H1 (cell line): ENCODE measurements at regions of chr17 and their contacts with region 1.

Region 1: DNA sequence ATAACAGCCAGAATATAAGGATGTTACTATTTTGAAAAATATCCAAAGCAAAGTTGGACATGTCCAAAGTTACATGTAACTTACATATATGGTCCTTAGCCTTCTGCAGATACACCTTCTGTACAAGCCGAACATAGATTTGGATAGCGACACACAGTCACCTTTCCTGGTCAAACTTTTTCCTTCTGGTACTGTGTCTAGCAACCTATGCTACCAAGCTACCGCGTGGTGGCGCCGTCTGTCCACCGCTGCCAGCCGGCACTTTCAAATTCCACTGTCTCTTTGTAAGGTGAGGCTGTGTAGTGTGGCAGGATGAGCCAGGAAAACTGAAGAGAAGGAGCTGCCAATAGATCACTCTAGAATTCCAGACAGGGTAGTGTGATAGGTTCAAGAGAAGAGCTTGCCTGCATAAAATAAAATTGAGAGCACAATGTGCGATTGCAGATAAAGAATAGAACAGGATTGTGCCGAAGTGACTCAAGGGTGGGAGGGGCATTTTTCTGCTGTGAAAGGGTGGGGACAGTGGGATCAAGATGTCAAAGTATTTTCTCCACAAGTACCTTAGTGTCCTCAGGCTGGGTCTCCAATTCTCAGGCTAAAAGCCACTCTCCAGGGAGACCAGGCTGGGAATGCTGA is 366.9 kb downstream of the SLC39A11 start:
- DNase-seq: peak in 1 of 2 experiments; percentile 71
- H3K4me3 ChIP-seq: no peak overlapping the region
- H3K27ac ChIP-seq: no peak overlapping the region
- H3K4me1 ChIP-seq: no peaks in the 10 kb centered on the region; a peak in 3 of 7 replicates
- H3K27me3 ChIP-seq: no peaks in the 10 kb centered on the region
- CTCF ChIP-seq: peak; percentile 90 to 93 (median 93)
- EP300 ChIP-seq: no peak
- POLR2A ChIP-seq: no peak
- RAD21 ChIP-seq: peak; percentile 96 to 98

Region 2: DNA sequence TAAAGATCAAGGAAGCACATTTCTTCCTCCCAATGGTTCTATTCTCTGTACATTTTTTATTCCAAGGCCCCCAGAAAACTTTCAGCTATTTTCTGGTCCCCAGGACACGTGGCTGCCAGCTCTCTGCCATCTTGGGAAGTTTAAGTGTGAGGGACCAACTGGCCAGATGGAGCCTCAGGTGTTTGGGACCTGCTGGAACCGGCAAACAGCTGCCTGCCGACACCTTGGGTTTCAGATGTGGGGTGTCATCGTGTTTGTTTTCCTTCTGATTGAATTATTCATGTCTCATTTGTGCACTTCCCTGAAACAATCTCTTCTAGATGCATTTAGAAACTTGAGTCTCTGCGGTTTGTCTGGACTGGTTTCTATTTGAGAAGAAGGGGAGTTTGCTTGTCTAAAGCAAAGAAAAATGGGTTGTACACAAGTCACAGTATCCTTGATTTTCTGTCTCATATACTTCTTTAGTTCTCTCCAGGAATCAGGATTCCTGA is 19.6 kb before region 1 on chr17:
- CTCF ChIA-PET with region 1: interaction called, 13 read pairs
- POLR2A ChIA-PET with region 1: no interaction called
- DNase-seq: no peak
- H3K4me3 ChIP-seq: no peak overlapping the region
- H3K27ac ChIP-seq: no peak overlapping the region
- H3K4me1 ChIP-seq: no peaks in the 10 kb centered on the region
- H3K27me3 ChIP-seq: no peaks in the 10 kb centered on the region; a peak in 1 of 7 replicates
- CTCF ChIP-seq: no peak
- EP300 ChIP-seq: no peak
- POLR2A ChIP-seq: no peak
- RAD21 ChIP-seq: no peak

Region 3: GRCh38 chr17:72804949-72805707 is 79.6 kb after region 1 on chr17:
- CTCF ChIA-PET with region 1: no interaction called
- POLR2A ChIA-PET with region 1: no interaction called
- DNase-seq: no peak
- H3K4me3 ChIP-seq: no peak overlapping the region
- H3K27ac ChIP-seq: no peak overlapping the region
- H3K4me1 ChIP-seq: no peaks in the 10 kb centered on the region
- H3K27me3 ChIP-seq: no peaks in the 10 kb centered on the region
- CTCF ChIP-seq: no peak
- EP300 ChIP-seq: no peak
- POLR2A ChIP-seq: no peak
- RAD21 ChIP-seq: no peak

Region 4: DNA sequence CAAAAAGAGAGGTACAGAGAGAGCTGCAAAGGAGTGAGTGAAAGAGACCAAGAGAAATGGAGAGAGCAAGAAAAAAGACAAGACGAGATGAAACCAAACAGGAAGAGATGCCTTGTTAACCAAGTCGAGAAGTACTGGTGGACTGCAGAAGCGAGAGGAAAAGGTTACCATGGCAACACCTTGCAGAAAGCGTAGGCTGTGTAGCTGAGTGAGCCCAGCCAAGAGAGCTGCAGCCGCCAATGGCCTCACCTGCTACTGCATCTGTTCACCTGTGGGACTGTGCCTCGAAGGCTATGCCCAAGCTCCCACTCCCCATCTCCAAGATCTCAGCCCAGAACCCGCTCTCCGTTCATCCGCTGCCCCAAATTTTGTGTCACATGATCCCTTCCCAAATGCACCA is 205.6 kb after region 1 on chr17:
- CTCF ChIA-PET with region 1: interaction called, 11 read pairs
- POLR2A ChIA-PET with region 1: no interaction called
- DNase-seq: no peak
- H3K4me3 ChIP-seq: no peak overlapping the region
- H3K27ac ChIP-seq: no peak overlapping the region
- H3K4me1 ChIP-seq: no peaks in the 10 kb centered on the region
- H3K27me3 ChIP-seq: no peaks in the 10 kb centered on the region
- CTCF ChIP-seq: no peak
- EP300 ChIP-seq: no peak
- POLR2A ChIP-seq: no peak
- RAD21 ChIP-seq: no peak

Region 5: DNA sequence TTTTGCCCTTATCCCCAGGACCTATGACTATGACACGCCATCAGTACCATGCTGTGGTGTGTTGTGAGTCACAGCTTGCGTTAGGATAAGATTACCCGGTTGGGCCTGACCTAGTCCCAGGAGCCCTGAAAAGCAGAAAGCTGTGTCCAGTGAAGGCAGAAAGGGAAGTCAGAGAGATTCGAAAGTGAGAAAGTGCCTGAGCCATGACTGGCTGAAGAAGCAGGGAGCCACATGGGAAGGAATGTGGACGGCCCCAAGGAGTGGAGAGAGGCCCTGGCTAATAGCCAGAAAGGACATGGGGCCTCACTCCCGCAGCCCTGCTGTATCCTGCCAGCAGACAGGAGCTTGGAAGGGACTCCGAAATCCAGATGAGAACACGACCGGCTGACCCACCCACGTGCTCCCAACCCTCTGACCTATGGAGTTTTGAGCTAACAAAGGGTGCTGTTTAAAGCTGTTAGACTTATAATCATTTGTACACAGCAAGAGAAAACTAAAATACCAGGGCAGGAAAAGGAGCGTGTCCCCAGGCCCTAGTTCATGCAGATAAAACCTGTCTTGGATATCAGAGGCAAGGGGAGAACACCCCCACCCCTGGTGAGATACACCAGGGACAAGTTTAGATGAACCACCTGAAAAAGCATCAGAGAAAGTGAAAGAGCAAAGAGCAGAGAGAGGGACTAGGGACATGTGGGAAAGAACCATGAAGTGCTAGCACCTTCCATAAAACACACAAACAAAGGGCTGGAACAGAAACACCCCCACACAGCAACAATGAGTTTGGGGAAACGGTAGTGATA is 251.6 kb after region 1 on chr17:
- CTCF ChIA-PET with region 1: interaction called, 27 read pairs
- POLR2A ChIA-PET with region 1: no interaction called
- DNase-seq: no peak
- H3K4me3 ChIP-seq: no peak overlapping the region
- H3K27ac ChIP-seq: no peak overlapping the region
- H3K4me1 ChIP-seq: no peaks in the 10 kb centered on the region; a peak in 1 of 7 replicates
- H3K27me3 ChIP-seq: no peaks in the 10 kb centered on the region
- CTCF ChIP-seq: no peak
- EP300 ChIP-seq: no peak
- POLR2A ChIP-seq: no peak
- RAD21 ChIP-seq: no peak

Region 6: GRCh38 chr17:73156166-73156840 is 430.8 kb after region 1 on chr17:
- CTCF ChIA-PET with region 1: interaction called, 20 read pairs
- POLR2A ChIA-PET with region 1: no interaction called
- DNase-seq: peak in 1 of 2 experiments; percentile 89
- H3K4me3 ChIP-seq: no peak overlapping the region
- H3K27ac ChIP-seq: no peak overlapping the region
- H3K4me1 ChIP-seq: peaks cover 5 to 10% (median 8%) of the 10 kb centered on the region in 4 experiments; a peak in 6 of 7 replicates
- H3K27me3 ChIP-seq: no peaks in the 10 kb centered on the region; a peak in 2 of 7 replicates
- CTCF ChIP-seq: peak; percentile 73 to 88 (median 81)
- EP300 ChIP-seq: no peak
- POLR2A ChIP-seq: no peak
- RAD21 ChIP-seq: peak; percentile 82 to 86

Region 7: DNA sequence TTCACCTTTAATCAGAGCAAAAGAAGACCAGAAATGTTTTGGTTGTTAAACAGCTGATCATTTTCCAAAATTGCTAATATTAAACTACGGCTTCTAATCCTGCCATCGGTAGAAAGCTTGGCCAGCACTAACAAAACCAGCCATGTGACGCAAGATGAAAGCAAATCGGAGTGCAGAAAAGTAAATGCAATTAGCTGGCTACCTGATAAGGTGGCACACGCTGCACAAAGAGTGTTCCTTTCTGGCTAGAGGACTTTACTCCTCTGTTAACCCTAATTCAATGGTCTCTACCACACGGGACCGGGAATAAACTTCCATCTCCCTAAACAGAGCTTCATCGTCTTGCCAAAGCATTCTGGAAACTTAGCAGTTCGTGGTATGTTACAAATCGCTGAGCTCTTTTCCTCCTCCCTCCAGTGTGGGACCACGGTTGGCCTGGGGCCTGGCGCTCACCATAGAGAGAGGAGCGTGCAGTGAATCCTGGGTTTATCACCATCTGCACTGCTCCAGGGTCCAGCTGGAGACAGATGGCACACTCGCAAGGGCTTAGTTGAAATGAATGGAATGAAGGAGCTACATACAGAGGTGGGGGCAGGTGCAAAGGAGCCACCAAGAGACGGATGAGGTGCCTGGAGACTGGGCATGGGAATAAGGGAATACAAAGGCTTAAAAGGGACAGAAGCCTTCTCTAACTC is 457.2 kb after region 1 on chr17:
- CTCF ChIA-PET with region 1: interaction called, 139 read pairs
- POLR2A ChIA-PET with region 1: interaction called, 4 read pairs
- DNase-seq: no peak
- H3K4me3 ChIP-seq: no peak overlapping the region
- H3K27ac ChIP-seq: no peak overlapping the region
- H3K4me1 ChIP-seq: no peaks in the 10 kb centered on the region
- H3K27me3 ChIP-seq: no peaks in the 10 kb centered on the region
- CTCF ChIP-seq: no peak
- EP300 ChIP-seq: no peak
- POLR2A ChIP-seq: no peak
- RAD21 ChIP-seq: no peak

Region 8: GRCh38 chr17:73247726-73248125 is 522.2 kb after region 1 on chr17:
- CTCF ChIA-PET with region 1: interaction called, 22 read pairs
- POLR2A ChIA-PET with region 1: no interaction called
- DNase-seq: no peak
- H3K4me3 ChIP-seq: no peak overlapping the region
- H3K27ac ChIP-seq: no peak overlapping the region
- H3K4me1 ChIP-seq: no peaks in the 10 kb centered on the region
- H3K27me3 ChIP-seq: no peaks in the 10 kb centered on the region
- CTCF ChIP-seq: peak in 1 of 3 experiments; percentile 3; a peak in 1 of 4 replicates
- EP300 ChIP-seq: no peak
- POLR2A ChIP-seq: no peak
- RAD21 ChIP-seq: peak in 1 of 2 experiments; percentile 7; a peak in 1 of 4 replicates